ENCODE measurements at regions of chr5 and their contacts with region 1.

Region 1: GRCh38 chr5:131281133-131281867 is 17.4 kb downstream of the CDC42SE2 start:
- DNase-seq: peak in 7 of 9 donors; percentile 74 to 94 (median 89)
- ATAC-seq: peak; percentile 91
- H3K4me3 ChIP-seq: peak overlapping the region; percentile 50
- H3K4me3 Mint-ChIP-seq: peak overlapping the region; percentile 72 to 87 (median 80)
- H3K27ac ChIP-seq: peak overlapping the region; percentile 80
- H3K27ac Mint-ChIP-seq: peak overlapping the region; percentile 82 to 98 (median 94)
- H3K4me1 ChIP-seq: peaks cover 65 to 88% of the 10 kb centered on the region in 2 donors
- H3K4me1 Mint-ChIP-seq: peaks cover 42 to 90% (median 80%) of the 10 kb centered on the region in 7 donors
- H3K27me3 ChIP-seq: no peaks in the 10 kb centered on the region
- H3K27me3 Mint-ChIP-seq: peaks cover 0 to 3% (median 0%) of the 10 kb centered on the region in 5 donors

Region 2: DNA sequence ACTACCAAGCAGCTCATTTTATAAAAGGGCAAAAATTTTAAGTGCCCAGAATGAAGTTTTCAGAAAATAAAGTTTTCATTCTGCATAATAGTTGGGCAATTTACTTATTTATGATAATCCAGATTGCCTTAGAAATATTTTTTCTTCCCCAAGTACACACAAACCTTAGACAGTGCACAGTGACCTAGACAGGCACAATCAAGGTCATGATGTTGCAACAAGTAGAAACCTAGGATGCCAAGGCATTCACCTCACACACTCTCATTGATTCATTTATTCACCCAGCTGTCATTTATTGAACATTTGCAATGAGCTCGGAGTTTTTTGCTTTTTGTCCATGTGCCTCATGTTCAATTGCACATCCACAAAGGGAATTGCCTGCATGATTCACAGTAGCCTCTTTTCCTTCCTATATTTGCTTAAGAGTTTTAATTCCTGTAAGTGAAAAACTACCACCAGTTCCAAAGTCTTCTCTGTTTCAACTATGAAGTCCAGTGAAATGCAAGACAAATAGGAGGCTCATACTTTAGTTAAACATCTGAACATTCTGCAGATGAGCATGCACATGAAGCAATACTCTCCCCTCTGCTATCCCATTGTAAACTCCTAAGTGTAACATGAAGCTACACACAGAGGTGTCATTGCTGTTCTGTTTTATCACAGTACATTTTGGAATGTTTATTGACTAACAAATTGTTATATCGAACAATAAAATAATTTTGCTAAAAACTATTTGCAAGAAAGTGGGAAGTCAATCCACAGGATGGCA is 239.1 kb before region 1 on chr5:
- CTCF ChIA-PET with region 1: no interaction called
- POLR2A ChIA-PET with region 1: no interaction called
- intact Hi-C with region 1: no loop called
- DNase-seq: no peak
- ATAC-seq: no peak
- H3K4me3 ChIP-seq: no peak overlapping the region
- H3K4me3 Mint-ChIP-seq: no peak overlapping the region
- H3K27ac ChIP-seq: no peak overlapping the region
- H3K27ac Mint-ChIP-seq: no peak overlapping the region
- H3K4me1 ChIP-seq: no peaks in the 10 kb centered on the region
- H3K4me1 Mint-ChIP-seq: peaks cover 0 to 1% (median 0%) of the 10 kb centered on the region in 7 donors
- H3K27me3 ChIP-seq: no peaks in the 10 kb centered on the region
- H3K27me3 Mint-ChIP-seq: peaks cover 0 to 22% (median 0%) of the 10 kb centered on the region in 5 donors

Region 3: DNA sequence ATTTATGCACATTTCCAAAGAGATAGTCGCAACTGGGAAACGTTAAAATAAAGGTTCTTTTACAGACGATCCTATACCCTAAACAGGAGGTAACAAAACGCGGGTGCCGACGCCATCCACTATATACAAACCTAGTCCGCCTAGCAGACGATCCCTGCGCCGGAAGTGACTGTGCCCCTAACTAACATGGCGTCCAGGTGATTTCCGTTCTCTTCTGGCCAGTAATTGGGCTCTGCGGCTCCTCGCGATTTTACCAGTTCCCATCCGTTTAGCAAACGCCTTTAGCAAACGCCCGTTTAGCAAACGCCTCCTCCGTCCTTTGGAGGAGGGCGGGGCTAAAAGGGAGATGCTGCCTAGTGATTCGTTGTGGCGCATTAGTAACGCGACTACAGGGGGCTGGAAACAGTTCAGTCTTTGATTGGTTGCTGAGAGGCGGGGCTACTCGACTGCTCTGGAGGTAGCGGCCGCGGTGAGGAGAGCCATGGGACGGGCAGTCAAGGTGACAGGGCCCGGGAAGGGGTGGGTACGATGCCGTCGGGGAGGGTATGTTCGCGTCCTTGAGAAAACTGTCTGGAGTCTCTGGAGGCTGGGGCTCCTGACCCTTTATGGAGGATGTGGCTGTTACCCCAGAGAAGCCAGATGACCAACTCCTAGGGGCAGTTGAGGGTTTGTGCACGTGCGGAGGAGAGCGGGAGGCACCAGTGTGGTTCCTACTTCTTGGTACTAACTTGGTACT is 110.6 kb before region 1 on chr5 and contains the start of gene LYRM7:
- CTCF ChIA-PET with region 1: interaction called, 3 read pairs
- POLR2A ChIA-PET with region 1: interaction called, 4 read pairs
- intact Hi-C with region 1: loop called in 1 of 2 experiments (anchors 1 kb)
- DNase-seq: peak; percentile 70 to 99 (median 95)
- ATAC-seq: peak; percentile 98
- H3K4me3 ChIP-seq: peak within 1 kb of the TSS; percentile 74
- H3K4me3 Mint-ChIP-seq: peak within 1 kb of the TSS; percentile 95 to 100 (median 98)
- H3K27ac ChIP-seq: peak within 1 kb of the TSS; percentile 82
- H3K27ac Mint-ChIP-seq: peak within 1 kb of the TSS; percentile 92 to 98 (median 97)
- H3K4me1 ChIP-seq: peaks cover 11 to 16% of the 10 kb centered on the region in 2 donors
- H3K4me1 Mint-ChIP-seq: peaks cover 37 to 72% (median 63%) of the 10 kb centered on the region in 7 donors
- H3K27me3 ChIP-seq: no peaks in the 10 kb centered on the region
- H3K27me3 Mint-ChIP-seq: no peaks in the 10 kb centered on the region
- total RNA-seq, gene LYRM7: 8.2 to 18.8 (median 16.3) TPM

Region 4: DNA sequence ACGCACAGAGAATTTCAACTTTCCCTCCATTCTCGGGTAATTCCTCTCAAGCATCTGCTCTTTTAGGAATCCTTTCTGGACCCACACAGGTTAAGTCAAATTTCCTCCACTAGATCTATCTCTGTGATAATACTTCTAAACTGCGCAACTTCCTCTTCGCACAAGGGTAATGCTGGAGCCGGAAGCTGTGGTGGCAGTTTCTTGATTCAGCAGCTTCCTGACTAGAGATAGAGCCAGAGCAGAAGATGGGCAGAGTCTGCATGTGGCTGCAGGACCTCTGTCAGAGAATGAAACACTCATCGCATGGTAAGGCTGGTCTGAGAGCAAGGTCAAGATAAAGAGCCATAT is 28.5 kb before region 1 on chr5:
- CTCF ChIA-PET with region 1: no interaction called
- POLR2A ChIA-PET with region 1: interaction called, 18 read pairs
- intact Hi-C with region 1: loop called (anchors 1 to 5 kb)
- DNase-seq: peak; percentile 41 to 90 (median 87)
- ATAC-seq: peak; percentile 93
- H3K4me3 ChIP-seq: peak overlapping the region; percentile 72
- H3K4me3 Mint-ChIP-seq: peak overlapping the region; percentile 80 to 97 (median 96)
- H3K27ac ChIP-seq: peak overlapping the region; percentile 78
- H3K27ac Mint-ChIP-seq: peak overlapping the region; percentile 91 to 97 (median 95)
- H3K4me1 ChIP-seq: peaks cover 51 to 54% of the 10 kb centered on the region in 2 donors
- H3K4me1 Mint-ChIP-seq: peaks cover 62 to 89% (median 67%) of the 10 kb centered on the region in 7 donors
- H3K27me3 ChIP-seq: no peaks in the 10 kb centered on the region
- H3K27me3 Mint-ChIP-seq: no peaks in the 10 kb centered on the region

Region 5: DNA sequence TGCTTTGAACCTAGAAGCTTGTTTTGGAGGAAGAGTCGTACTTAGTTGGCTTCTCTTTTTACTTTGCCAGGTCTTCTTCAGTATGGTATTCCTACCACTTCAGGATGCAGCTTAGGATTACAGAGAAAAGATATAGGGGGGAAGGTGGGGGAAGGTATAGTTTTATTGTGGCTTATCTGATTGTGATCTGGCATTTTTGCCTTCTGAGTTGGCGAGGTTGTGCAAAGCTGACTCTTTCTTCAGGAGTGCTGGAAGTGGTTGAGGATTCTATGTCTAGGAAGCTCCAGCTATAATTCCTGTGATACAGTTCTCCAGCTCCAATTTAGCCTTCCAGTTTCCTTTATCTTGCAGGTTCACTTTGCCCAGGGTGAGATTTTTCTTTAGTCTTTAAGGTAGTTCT is 10.5 kb before region 1 on chr5:
- CTCF ChIA-PET with region 1: interaction called, 5 read pairs
- POLR2A ChIA-PET with region 1: interaction called, 176 read pairs
- intact Hi-C with region 1: loop called in 1 of 2 experiments (anchors 1 kb)
- DNase-seq: no peak
- ATAC-seq: no peak
- H3K4me3 ChIP-seq: peak overlapping the region; percentile 29
- H3K4me3 Mint-ChIP-seq: peak overlapping the region; percentile 63 to 90 (median 84)
- H3K27ac ChIP-seq: peak overlapping the region; percentile 74
- H3K27ac Mint-ChIP-seq: peak overlapping the region; percentile 48 to 96 (median 91)
- H3K4me1 ChIP-seq: peaks cover 49 to 66% of the 10 kb centered on the region in 2 donors
- H3K4me1 Mint-ChIP-seq: peaks cover 50 to 83% (median 68%) of the 10 kb centered on the region in 7 donors
- H3K27me3 ChIP-seq: no peaks in the 10 kb centered on the region
- H3K27me3 Mint-ChIP-seq: no peaks in the 10 kb centered on the region

Region 6: GRCh38 chr5:131322926-131323325 is 41.6 kb after region 1 on chr5:
- CTCF ChIA-PET with region 1: no interaction called
- POLR2A ChIA-PET with region 1: interaction called, 3 read pairs
- intact Hi-C with region 1: loop called in 1 of 2 experiments (anchors 2 kb)
- DNase-seq: no peak
- ATAC-seq: peak; percentile 14
- H3K4me3 ChIP-seq: no peak overlapping the region
- H3K4me3 Mint-ChIP-seq: peak overlapping the region in 8 of 10 donors; percentile 8 to 61 (median 50)
- H3K27ac ChIP-seq: no peak overlapping the region
- H3K27ac Mint-ChIP-seq: peak overlapping the region; percentile 56 to 89 (median 71)
- H3K4me1 ChIP-seq: peaks cover 25 to 46% of the 10 kb centered on the region in 2 donors
- H3K4me1 Mint-ChIP-seq: peaks cover 47 to 90% (median 72%) of the 10 kb centered on the region in 7 donors
- H3K27me3 ChIP-seq: no peaks in the 10 kb centered on the region
- H3K27me3 Mint-ChIP-seq: no peaks in the 10 kb centered on the region

Region 7: DNA sequence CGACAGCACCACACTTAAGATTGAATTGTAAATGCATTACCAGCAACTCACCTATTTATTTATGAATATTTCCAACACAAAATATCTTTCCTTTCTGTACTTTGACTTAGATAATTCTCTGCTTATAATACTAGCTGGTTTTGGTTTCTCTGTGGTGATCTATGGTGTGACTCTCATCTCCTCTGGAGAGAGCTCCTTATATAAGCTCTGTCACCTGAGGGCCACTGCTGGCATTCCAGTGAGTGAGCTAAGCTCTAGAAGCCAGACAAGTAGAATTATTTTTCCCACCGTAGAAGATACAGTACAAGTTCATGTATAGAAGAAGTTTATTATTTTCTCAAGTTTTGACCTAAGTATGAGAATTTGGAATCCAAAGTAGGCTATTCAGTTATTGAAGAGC is 94.1 kb after region 1 on chr5:
- CTCF ChIA-PET with region 1: no interaction called
- POLR2A ChIA-PET with region 1: interaction called, 10 read pairs
- intact Hi-C with region 1: no loop called
- DNase-seq: peak in 1 of 9 donors; percentile 60
- ATAC-seq: no peak
- H3K4me3 ChIP-seq: no peak overlapping the region
- H3K4me3 Mint-ChIP-seq: peak overlapping the region in 8 of 10 donors; percentile 15 to 80 (median 56)
- H3K27ac ChIP-seq: peak overlapping the region; percentile 97
- H3K27ac Mint-ChIP-seq: peak overlapping the region; percentile 86 to 99 (median 94)
- H3K4me1 ChIP-seq: peaks cover 80 to 91% of the 10 kb centered on the region in 2 donors
- H3K4me1 Mint-ChIP-seq: peaks cover 44 to 100% (median 91%) of the 10 kb centered on the region in 7 donors
- H3K27me3 ChIP-seq: no peaks in the 10 kb centered on the region
- H3K27me3 Mint-ChIP-seq: no peaks in the 10 kb centered on the region